Mucosa of descending colon (tissue), 3 donors: ENCODE measurements at regions of chr3 and their contacts with region 1.

Region 1: GRCh38 chr3:39180546-39181346 is 11.6 kb downstream of the XIRP1 start:
- DNase-seq: peak; percentile 94 to 97 (median 97)
- ATAC-seq: peak; percentile 92
- H3K4me3 ChIP-seq: no peak overlapping the region
- H3K4me1 ChIP-seq: peaks cover 14% of the 10 kb centered on the region
- CTCF ChIP-seq: peak; percentile 41

Region 2: GRCh38 chr3:39141171-39141995 is 39.4 kb before region 1 on chr3:
- intact Hi-C with region 1: loop called (anchors 5 to 10 kb)
- DNase-seq: peak; percentile 86 to 94 (median 92)
- ATAC-seq: peak; percentile 77
- H3K4me3 ChIP-seq: no peak overlapping the region
- H3K4me1 ChIP-seq: peaks cover 38% of the 10 kb centered on the region
- CTCF ChIP-seq: no peak

Region 3: DNA sequence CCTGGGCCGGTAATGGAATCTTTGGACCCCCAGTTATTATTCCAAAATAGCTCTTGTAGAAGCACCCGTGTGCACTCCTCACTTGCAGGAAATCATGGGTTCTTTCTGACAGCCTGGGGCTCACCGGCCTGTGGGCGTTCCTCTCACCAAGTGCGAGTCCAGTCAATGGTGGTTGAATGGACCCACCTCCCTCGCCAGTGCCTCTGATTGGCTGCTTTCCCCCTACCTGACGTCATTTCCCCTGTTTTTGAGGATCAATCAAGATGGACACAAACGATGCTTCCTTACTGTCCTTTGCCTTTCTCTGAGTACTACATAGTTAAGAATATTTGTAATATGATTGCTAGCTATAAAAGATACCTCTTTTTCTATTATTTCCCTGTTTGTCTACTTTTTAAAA is 304.8 kb after region 1 on chr3:
- intact Hi-C with region 1: no loop called
- DNase-seq: no peak
- ATAC-seq: no peak
- H3K4me3 ChIP-seq: no peak overlapping the region
- H3K4me1 ChIP-seq: no peaks in the 10 kb centered on the region
- CTCF ChIP-seq: no peak